A549 (cell line): ENCODE measurements at regions of chr1 and their contacts with region 1.

Region 1: GRCh38 chr1:160291248-160292220 is 6.6 kb upstream of the PEX19 start:
- DNase-seq: peak; percentile 62 to 76
- ATAC-seq: peak; percentile 92 to 95
- H3K4me3 ChIP-seq: no peak overlapping the region
- H3K27ac ChIP-seq: no peak overlapping the region
- H3K4me1 ChIP-seq: no peaks in the 10 kb centered on the region
- CTCF ChIP-seq: peak; percentile 84
- EP300 ChIP-seq: no peak
- POLR2A ChIP-seq: no peak
- RAD21 ChIP-seq: peak; percentile 51 to 56

Region 2: GRCh38 chr1:160244209-160244608 is 47.3 kb before region 1 on chr1:
- CTCF ChIA-PET with region 1: interaction called, 11 read pairs
- POLR2A ChIA-PET with region 1: no interaction called
- DNase-seq: no peak
- ATAC-seq: no peak
- H3K4me3 ChIP-seq: no peak overlapping the region
- H3K27ac ChIP-seq: no peak overlapping the region
- H3K4me1 ChIP-seq: peaks cover 16% of the 10 kb centered on the region
- CTCF ChIP-seq: no peak
- EP300 ChIP-seq: no peak
- POLR2A ChIP-seq: no peak
- RAD21 ChIP-seq: no peak

Region 3: GRCh38 chr1:160261893-160262794 is 29.4 kb before region 1 on chr1 and contains the start of gene DCAF8:
- CTCF ChIA-PET with region 1: interaction called, 38 read pairs
- POLR2A ChIA-PET with region 1: interaction called, 7 read pairs
- DNase-seq: peak; percentile 89 to 98
- ATAC-seq: peak; percentile 95 to 96
- H3K4me3 ChIP-seq: peak within 1 kb of the TSS; percentile 83
- H3K27ac ChIP-seq: peak within 1 kb of the TSS; percentile 96 to 99
- H3K4me1 ChIP-seq: peaks cover 36% of the 10 kb centered on the region
- CTCF ChIP-seq: no peak
- EP300 ChIP-seq: no peak
- POLR2A ChIP-seq: peak; percentile 97
- RAD21 ChIP-seq: no peak
- polyA plus RNA-seq, gene DCAF8: 103 and 113 TPM in 2 replicates

Region 4: GRCh38 chr1:160277330-160277729 is 14.2 kb before region 1 on chr1:
- CTCF ChIA-PET with region 1: interaction called, 86 read pairs
- POLR2A ChIA-PET with region 1: no interaction called
- DNase-seq: no peak
- ATAC-seq: no peak
- H3K4me3 ChIP-seq: no peak overlapping the region
- H3K27ac ChIP-seq: no peak overlapping the region
- H3K4me1 ChIP-seq: no peaks in the 10 kb centered on the region
- CTCF ChIP-seq: no peak
- EP300 ChIP-seq: no peak
- POLR2A ChIP-seq: no peak
- RAD21 ChIP-seq: no peak

Region 5: GRCh38 chr1:160315359-160315758 is 23.8 kb after region 1 on chr1:
- CTCF ChIA-PET with region 1: interaction called, 17 read pairs
- POLR2A ChIA-PET with region 1: no interaction called
- DNase-seq: no peak
- ATAC-seq: no peak
- H3K4me3 ChIP-seq: no peak overlapping the region
- H3K27ac ChIP-seq: no peak overlapping the region
- H3K4me1 ChIP-seq: no peaks in the 10 kb centered on the region
- CTCF ChIP-seq: no peak
- EP300 ChIP-seq: no peak
- POLR2A ChIP-seq: no peak
- RAD21 ChIP-seq: no peak

Region 6: DNA sequence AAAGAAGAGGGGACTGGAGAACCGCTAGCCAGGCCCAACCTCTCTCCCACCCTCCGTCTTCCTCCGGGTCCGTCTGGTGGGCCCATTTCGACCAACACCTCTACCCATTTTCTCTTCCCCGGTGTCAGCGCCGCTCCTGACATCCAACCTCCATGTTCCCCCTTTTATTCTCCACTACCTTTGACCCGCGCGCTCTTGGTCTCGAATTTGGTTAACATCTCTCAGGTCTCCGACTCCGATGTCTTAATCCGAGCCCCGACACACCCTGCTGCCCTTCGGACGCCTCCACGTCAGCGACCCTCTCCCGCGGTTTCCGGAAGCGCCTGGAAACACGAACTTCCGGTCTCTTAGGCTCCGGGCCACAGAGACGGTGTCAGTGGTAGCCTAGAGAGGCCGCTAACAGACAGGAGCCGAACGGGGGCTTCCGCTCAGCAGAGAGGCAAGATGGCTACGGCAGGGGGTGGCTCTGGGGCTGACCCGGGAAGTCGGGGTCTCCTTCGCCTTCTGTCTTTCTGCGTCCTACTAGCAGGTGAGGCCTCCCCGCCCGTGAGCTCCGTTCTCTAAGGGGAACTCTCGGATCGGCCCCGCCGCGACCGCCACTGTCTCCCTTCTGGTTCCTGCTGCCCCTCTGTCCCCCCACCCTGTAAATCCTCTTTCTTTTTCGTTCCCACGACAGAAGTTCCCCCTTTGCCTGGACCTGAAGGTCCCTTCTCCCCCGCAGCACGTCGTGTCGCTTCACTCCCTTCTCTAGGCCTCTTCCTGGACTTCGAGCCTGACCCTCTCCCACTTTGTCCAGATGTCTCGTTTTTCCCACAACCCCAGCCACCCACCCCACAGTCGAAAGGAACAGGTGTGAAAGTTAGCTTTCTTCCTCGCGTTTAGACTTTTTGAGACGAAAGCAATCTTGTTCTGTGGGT is 51.7 kb after region 1 on chr1 and contains the starts of genes COPA and NCSTN:
- CTCF ChIA-PET with region 1: interaction called, 11 read pairs
- POLR2A ChIA-PET with region 1: no interaction called
- DNase-seq: peak; percentile 90 to 96
- ATAC-seq: peak; percentile 99 to 100
- H3K4me3 ChIP-seq: peak within 1 kb of the TSS; percentile 93
- H3K27ac ChIP-seq: peak within 1 kb of the TSS; percentile 92 to 93
- H3K4me1 ChIP-seq: peaks cover 20% of the 10 kb centered on the region
- CTCF ChIP-seq: no peak
- EP300 ChIP-seq: no peak
- POLR2A ChIP-seq: peak; percentile 76
- RAD21 ChIP-seq: no peak
- polyA plus RNA-seq, gene COPA: 149 and 188 TPM in 2 replicates
- polyA plus RNA-seq, gene NCSTN: 90.4 and 91.6 TPM in 2 replicates

Region 7: DNA sequence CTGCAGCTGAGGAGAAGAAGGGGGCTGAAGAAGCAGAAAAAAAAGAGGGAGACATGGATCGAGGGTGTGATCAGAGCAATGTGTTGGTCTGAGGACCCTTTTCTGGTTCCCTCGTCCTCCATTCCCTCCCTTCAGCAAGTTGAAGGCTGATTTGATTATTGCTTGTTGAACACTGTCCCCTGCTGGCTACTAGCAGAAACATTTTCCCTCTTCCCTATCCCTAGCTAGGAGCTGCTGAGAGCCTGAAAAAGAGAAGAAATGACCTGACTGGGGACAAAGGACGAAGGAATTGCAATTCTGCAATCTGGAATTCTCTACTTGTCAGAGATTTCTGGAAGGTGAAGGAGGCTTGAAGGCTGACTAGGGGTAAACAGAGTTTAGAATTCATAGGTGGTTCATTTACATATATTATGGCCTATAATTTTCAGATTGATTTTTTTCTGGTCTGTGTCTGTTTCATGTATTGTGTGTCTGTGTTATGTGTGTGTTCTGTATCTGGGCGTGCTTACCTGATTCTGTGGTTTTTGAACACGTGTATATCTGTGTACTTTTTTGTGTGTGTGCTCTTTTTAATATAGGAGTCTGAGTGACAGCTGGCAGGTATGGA is 85.1 kb after region 1 on chr1:
- CTCF ChIA-PET with region 1: interaction called, 37 read pairs
- POLR2A ChIA-PET with region 1: no interaction called
- DNase-seq: peak; percentile 65 to 76
- ATAC-seq: peak; percentile 80 to 93
- H3K4me3 ChIP-seq: no peak overlapping the region
- H3K27ac ChIP-seq: no peak overlapping the region
- H3K4me1 ChIP-seq: no peaks in the 10 kb centered on the region
- CTCF ChIP-seq: peak; percentile 96
- EP300 ChIP-seq: no peak
- POLR2A ChIP-seq: no peak
- RAD21 ChIP-seq: peak; percentile 84 to 94